Activated CD4-positive, alpha-beta T cell treated with anti-CD3 and anti-CD28 coated beads, Interleukin-2, amount 10 ng/mL, durations not matched to agents 24 days and 14 days (primary cell): ENCODE measurements at regions of chr7 and their contacts with region 1.

Region 1: GRCh38 chr7:17940302-17940883 is at the start of gene SNX13:
- DNase-seq: peak; percentile 96
- H3K4me3 Mint-ChIP-seq: peak within 1 kb of the TSS; percentile 99
- H3K27ac Mint-ChIP-seq: peak within 1 kb of the TSS; percentile 93
- H3K4me1 Mint-ChIP-seq: peaks cover 32% of the 10 kb centered on the region
- H3K27me3 Mint-ChIP-seq: peaks cover 17% of the 10 kb centered on the region
- total RNA-seq, gene SNX13: 18.1 and 23.7 TPM in 2 replicates

Region 2: DNA sequence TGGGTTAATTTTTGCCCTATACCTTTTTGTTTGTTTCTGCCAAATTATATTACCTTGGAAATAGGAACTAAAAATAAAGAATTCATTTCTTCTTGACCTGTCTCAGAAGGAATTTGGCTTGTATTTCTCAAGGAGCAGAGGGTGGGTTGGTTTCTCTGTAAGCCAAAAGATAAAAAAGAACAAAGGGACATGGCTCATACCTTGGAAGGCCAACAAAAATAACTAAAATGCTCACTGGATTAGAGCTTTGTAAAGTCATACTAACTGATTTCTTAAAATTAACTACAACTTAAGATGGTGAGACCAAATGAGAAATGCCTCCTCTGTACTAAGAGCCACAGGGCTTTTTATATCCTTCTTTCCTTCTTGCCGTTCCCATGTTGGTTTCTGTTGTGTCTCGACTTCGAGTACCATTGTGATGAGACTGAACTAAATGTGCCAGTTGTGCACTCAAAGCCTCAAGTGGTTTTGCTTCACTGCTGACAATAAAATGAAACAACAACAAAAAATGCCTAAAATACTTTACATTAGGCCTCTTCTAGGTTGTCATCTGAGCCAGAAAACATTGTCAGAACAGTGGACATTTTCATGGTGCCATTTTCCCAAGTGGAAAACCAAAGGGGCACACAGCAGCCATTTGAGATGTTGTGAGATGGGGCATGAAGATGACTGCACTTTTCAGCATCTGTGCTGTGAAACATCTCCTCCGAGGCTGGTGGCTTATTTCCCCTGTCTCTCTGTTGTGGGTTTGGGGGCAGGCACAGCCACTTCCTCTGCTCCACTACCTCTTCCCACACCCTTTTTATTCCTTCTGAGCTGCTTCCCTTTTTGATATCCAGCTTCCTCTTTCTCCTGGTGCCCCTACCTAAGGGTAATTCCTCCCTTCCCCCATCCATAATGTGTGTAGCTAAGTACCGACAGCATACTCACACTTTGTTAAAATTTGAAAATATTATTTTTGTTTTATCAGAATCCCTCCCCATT is 1006.8 kb before region 1 on chr7:
- intact Hi-C with region 1: loop called (anchors 10 kb)
- DNase-seq: peak; percentile 74
- H3K4me3 Mint-ChIP-seq: peak overlapping the region; percentile 32
- H3K27ac Mint-ChIP-seq: peak overlapping the region; percentile 68
- H3K4me1 Mint-ChIP-seq: peaks cover 51% of the 10 kb centered on the region
- H3K27me3 Mint-ChIP-seq: no peaks in the 10 kb centered on the region

Region 3: GRCh38 chr7:17516771-17517170 is 423.6 kb before region 1 on chr7:
- intact Hi-C with region 1: no loop called
- DNase-seq: no peak
- H3K4me3 Mint-ChIP-seq: no peak overlapping the region
- H3K27ac Mint-ChIP-seq: no peak overlapping the region
- H3K4me1 Mint-ChIP-seq: no peaks in the 10 kb centered on the region
- H3K27me3 Mint-ChIP-seq: no peaks in the 10 kb centered on the region

Region 4: GRCh38 chr7:17871815-17872533 is 68.4 kb before region 1 on chr7:
- intact Hi-C with region 1: loop called (anchors 5 kb)
- DNase-seq: no peak
- H3K4me3 Mint-ChIP-seq: no peak overlapping the region
- H3K27ac Mint-ChIP-seq: no peak overlapping the region
- H3K4me1 Mint-ChIP-seq: peaks cover 9% of the 10 kb centered on the region
- H3K27me3 Mint-ChIP-seq: no peaks in the 10 kb centered on the region

Region 5: GRCh38 chr7:17887286-17887685 is 53.1 kb before region 1 on chr7:
- intact Hi-C with region 1: no loop called
- DNase-seq: no peak
- H3K4me3 Mint-ChIP-seq: no peak overlapping the region
- H3K27ac Mint-ChIP-seq: no peak overlapping the region
- H3K4me1 Mint-ChIP-seq: peaks cover 5% of the 10 kb centered on the region
- H3K27me3 Mint-ChIP-seq: no peaks in the 10 kb centered on the region

Region 6: DNA sequence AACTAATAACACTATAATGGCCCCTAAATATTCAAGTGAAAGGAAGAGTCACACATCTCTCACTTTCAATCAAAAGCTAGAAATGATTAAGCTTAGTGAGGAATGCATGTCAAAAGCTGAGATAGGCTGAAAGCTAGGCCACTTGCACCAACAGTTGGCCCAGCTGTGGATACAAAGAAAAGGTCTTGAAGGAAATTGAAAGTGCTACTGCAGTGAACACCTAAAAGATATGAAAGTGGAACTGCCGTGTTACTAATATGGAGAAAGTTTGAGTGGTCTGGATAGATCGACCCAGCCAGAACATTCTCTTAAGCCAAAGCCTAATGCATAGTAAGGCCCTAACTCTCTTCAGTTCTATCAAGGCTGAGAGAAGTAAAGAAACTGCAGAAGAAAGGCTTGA is 12.0 kb after region 1 on chr7:
- intact Hi-C with region 1: loop called (anchors 1 kb)
- DNase-seq: peak; percentile 70
- H3K4me3 Mint-ChIP-seq: peak overlapping the region; percentile 63
- H3K27ac Mint-ChIP-seq: peak overlapping the region; percentile 21
- H3K4me1 Mint-ChIP-seq: peaks cover 15% of the 10 kb centered on the region
- H3K27me3 Mint-ChIP-seq: peaks cover 15% of the 10 kb centered on the region